ENCODE measurements at regions of chrX and their contacts with region 1.

Region 1: DNA sequence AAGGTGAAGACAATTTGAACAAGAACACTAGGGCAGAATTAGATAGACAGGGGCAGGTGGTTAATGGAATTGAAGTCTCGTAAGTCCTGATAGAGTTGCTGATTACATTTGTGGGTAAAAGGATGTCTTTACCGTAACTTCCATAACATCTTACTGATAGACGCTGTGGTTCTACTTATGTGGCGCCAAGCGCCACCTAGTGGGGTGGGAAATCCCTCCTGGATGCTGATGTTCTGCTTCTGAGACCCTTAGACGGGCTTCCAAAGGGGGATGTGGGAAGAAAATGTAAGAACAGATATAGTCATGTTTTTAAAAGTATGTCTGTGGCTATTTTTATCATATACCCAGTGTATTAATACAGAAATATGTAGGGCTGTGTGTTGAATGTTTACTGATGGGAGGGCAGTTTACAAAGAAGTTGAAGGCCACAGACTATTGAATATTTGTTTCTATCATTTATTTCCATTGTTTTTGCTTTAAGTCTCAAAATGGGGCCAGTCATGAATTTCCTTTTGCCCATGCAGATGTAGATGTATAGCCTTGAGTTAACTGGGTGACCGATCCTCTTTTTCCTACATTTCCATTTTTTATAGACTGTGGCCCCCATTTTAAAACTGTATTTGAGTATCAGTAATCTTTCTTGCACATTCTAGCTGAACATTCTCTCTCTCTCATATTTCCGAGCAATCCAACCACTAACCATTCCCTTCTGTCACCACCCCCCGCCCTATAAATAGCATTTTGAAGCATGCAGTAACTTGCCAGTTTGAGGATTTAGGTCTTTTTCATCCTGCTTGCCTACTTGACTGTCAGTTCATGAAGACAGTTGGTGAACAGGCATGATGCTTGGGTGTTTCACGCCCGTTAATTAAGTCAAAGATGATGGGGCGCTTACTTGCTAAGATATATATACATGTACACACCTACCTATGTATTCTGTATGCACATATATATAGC is 12.1 kb upstream of the TLR8 start:
- DNase-seq: peak; percentile 57
- CTCF ChIP-seq: peak; percentile 77

Region 2: GRCh38 chrX:12824944-12825343 is 69.4 kb before region 1 on chrX:
- in situ Hi-C with region 1: loop called (anchors 5 kb)
- DNase-seq: no peak
- CTCF ChIP-seq: peak; percentile 15

Region 3: DNA sequence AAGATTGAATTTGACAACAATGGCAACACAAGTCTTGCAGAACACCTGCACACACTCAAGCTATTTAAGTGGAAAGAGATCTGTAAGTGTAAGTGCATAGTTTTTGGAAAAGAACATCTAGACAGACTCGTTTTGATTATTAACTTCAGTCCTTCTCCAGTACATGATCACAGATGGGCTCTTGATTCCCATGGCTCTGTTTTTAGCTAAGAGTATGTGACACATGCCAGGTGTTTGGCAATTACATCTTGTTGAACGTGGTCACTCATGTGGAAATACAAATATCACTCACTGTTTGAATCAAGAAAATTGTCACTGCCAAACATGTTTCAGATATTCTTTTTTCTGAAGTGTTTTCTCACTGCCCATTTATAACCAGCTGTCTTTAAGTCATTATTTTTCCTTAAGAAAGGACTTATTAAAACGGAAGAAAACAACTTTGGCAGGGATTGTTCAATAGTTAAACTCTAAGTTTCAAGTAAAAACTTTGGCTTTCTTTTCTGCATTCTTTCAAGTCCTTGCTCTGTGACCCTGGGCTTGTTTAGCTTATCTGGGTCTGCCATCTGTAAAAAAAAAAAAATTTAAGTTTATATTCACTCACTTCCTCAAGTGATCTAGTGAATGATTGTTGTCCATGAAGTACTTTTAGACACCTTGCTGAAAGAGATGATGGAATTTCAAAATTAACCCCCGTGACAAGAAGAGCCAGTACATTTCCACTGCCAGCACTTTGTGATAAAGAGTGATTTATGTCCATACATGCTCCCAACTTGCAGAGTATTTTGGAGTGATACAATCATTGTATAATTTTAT is 300.1 kb after region 1 on chrX:
- in situ Hi-C with region 1: no loop called
- DNase-seq: no peak
- CTCF ChIP-seq: no peak

Measured in GM13977 (cell line).